Breast epithelium (tissue), 4 donors: ENCODE measurements at regions of chr19 and their contacts with region 1.

Region 1: DNA sequence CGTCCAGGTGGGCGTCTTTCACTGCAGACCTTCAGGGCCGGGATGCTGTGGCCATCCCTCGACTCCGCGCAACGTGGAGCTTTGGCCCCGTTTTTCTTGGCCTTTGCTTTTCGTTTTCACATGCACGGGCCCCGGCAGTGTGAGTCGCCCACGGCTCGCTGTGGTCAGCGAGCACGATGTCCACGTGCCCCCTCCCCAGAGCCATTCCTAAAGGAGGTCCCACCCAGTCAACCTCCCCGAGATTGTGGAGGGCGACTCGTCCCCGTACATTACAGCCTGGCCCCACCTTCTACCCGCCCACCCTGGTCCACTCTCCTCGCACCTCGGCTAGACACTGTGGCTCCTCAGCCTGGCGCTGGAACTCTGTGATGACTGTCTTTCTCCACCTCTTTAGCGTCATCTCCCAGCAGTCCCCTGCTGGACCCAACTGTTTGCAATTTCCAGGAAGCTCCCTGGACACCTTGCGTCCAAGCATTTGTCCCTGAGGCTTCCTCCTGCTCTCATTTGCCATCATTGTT is 405 bp downstream of the ZNF446 start:
- DNase-seq: no peak
- H3K4me3 ChIP-seq: peak overlapping the region; percentile 52 to 89 (median 68)
- H3K27ac ChIP-seq: peak overlapping the region; percentile 91 to 97
- H3K4me1 ChIP-seq: peaks cover 5 to 9% of the 10 kb centered on the region in 2 donors
- H3K27me3 ChIP-seq: no peaks in the 10 kb centered on the region
- CTCF ChIP-seq: no peak
- POLR2A ChIP-seq: no peak

Region 2: DNA sequence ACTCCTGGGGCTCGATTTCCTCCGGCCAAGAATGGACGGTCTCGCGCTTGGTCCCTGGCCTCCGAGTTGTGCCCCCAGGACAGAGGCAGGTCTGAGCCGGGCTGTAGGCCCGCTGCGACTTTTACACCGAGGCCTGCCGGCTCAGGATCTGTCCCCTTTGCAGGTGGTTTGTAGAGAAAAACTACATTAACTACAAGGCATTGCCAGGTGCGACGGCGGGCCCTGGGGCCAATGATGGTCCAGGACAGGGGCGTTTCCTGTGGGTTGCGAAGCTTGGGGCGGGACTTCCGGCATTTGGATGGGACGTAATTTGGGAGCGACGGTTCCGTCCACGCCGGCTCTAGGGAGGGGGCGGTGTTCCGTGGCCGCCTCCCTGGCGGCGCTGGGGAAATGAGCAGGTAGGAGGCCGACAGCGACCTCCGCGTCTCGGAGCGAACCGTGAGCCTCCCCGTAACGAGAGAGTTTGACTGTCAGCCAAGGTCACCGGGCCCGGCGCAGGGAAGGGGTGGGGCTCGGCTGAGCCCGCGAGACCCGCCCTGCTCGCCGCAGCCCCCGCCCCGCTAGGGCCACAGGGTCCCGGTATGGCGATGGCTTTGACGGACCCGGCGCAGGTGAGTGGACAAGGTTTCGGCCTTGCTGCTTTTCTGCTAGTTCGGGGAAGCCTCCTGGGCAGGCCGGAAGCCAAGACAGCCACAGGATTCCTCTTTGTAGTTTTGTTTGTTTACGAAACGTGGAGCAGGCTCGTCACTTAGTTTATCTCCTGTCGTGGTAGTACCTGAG is 1236.1 kb before region 1 on chr19 and contains the start of gene ZNF805:
- intact Hi-C with region 1: no loop called
- DNase-seq: peak; percentile 94 to 97
- H3K4me3 ChIP-seq: peak within 1 kb of the TSS; percentile 76 to 94 (median 80)
- H3K27ac ChIP-seq: peak within 1 kb of the TSS; percentile 94 to 96
- H3K4me1 ChIP-seq: peaks cover 4 to 9% of the 10 kb centered on the region in 2 donors
- H3K27me3 ChIP-seq: no peaks in the 10 kb centered on the region
- CTCF ChIP-seq: no peak
- POLR2A ChIP-seq: peak; percentile 18
- total RNA-seq, gene ZNF805: 17.0 to 29.9 (median 19.8) TPM

Region 3: DNA sequence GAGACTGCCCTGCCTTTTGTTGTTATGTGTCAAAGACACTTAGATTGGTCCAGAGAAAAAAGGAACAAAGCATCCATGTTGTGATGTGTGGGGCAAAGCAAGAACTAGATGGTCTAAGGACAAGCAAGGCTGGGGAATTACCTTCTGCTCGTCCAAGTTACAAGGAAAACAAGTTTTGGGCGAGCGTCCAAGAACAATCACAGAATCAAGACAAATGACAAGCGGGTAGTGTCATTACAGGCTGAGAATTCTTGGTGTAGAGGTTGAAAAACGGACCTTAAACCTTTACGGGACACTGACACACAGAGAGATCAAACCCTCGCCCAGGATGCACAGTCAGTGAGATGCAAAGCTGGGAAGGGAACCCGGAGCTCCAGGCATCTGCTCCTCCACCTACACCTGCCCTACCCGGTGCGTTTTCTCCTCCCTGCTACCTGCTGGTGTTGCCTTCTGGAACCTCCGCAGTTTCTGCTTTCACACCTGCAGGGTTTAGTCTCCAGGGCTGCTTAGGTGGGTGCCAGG is 25.7 kb before region 1 on chr19:
- intact Hi-C with region 1: loop called (anchors 1 kb)
- DNase-seq: no peak
- H3K4me3 ChIP-seq: peak overlapping the region; percentile 88 to 99 (median 94)
- H3K27ac ChIP-seq: peak overlapping the region; percentile 78 to 89
- H3K4me1 ChIP-seq: no peaks in the 10 kb centered on the region
- H3K27me3 ChIP-seq: peaks cover 0 to 4% of the 10 kb centered on the region in 2 donors
- CTCF ChIP-seq: no peak
- POLR2A ChIP-seq: no peak

Region 4: DNA sequence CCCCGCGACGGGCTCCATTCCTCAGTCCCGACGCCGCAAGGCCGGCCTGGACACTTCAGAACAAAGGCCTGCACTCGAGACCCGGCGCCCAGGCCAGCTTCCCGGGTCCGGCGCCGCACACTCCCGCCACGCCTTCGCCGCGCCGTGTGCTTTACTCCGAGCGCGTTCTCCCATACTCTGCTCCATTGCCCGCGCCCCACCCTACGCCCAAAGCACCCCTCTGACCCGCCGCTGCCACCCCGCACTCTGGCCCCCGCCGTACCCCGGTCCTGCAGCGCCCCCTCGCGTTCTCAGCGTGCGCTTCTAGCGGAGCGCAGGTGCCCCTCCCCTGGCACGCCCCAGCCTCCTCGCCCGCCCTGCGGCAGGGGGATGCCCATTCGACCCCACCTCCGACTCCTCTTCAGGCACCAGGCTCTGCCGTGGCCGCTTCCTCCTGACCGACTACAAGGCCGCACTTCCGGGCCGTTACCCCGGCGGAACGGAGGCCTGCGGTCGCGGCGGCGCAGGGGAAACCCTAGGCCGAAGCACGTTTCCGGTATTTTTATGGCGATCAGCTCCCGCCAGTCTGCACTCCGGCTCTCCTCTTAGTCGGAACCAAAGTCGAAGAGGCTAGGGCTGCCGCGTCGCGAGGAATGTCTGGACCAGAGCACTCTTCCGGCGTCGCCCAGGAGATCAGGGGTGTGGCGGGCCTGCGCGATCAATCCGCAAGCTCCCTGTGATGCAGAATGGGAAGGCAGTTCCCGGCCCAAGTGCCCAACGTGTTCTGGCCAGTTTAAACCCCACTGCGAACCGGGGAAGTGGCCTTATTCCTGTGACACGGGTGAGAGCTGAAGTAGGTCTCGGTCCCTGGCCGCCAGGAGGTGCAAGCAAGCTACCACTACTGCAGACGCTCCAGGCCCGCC is 43.0 kb after region 1 on chr19 and contains the start of gene ZBTB45:
- intact Hi-C with region 1: loop called (anchors 1 kb)
- DNase-seq: peak; percentile 90 to 92
- H3K4me3 ChIP-seq: peak within 1 kb of the TSS; percentile 82 to 93 (median 84)
- H3K27ac ChIP-seq: peak within 1 kb of the TSS; percentile 93 to 95
- H3K4me1 ChIP-seq: peaks cover 9 to 17% of the 10 kb centered on the region in 2 donors
- H3K27me3 ChIP-seq: no peaks in the 10 kb centered on the region
- CTCF ChIP-seq: peak; percentile 77 to 87 (median 78)
- POLR2A ChIP-seq: no peak
- total RNA-seq, gene ZBTB45: 8.2 to 9.2 (median 8.6) TPM